Naive thymus-derived CD8-positive, alpha-beta T cell (primary cell): ENCODE measurements at regions of chr1 and their contacts with region 1.

Region 1: DNA sequence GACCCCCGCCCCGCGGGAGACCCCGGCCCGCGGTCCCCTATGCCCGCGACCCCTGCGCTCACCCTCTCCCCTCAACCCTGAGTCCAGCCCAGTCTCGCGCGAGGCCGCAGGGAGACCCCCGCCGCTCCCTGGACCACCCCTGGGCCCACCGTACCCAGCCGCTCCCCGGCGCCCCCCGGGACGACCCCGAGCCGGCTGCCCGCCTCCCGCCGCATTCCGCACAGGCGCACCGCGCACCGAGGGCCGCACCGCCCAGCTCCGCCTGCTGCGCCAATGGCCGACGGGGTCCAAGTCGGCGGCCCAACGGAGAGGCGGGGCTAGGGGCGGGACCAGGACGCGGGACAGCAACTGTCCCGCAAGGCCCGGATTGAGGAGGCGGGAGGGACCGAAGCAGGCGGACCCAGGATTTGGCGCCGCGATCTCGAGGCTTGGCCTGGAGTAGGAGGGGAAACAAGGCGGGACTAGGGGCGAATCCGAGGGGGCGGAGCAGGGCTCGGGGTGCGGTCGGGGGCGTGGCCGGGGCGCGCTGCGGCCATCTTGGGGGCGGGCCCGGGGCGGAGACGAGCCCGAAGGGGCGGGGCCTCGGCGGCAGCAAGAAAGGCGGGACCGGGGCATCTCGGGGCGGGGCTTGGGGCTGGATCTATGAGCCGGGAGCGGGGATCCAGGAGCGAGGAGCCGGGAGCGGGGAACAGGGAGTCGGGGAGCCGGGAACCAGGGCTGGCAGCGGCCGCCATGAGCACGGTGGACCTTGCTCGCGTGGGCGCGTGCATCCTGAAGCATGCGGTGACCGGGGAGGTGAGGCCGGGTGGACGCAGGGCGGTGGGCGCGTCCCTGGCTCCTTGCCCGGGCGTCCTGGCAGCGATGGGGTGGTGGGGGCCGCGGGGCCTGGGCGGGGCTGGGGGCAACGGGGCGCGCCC is at the start of gene PRXL2B:
- DNase-seq: peak; percentile 91 to 100 (median 96)
- ATAC-seq: peak; percentile 57 to 65
- H3K4me3 Mint-ChIP-seq: peak within 1 kb of the TSS; percentile 88 to 96 (median 92)
- H3K27ac Mint-ChIP-seq: peak within 1 kb of the TSS; percentile 88 to 99 (median 97)
- H3K4me1 Mint-ChIP-seq: peaks cover 26 to 49% (median 42%) of the 10 kb centered on the region in 4 donors
- H3K27me3 Mint-ChIP-seq: no peaks in the 10 kb centered on the region
- polyA plus RNA-seq, gene PRXL2B: 20.6 to 37.5 (median 27.4) TPM

Region 2: GRCh38 chr1:2391041-2391930 is 195.1 kb before region 1 on chr1 and contains the starts of genes MORN1 and RER1:
- POLR2A ChIA-PET with region 1: interaction called, 13 read pairs
- DNase-seq: peak; percentile 90 to 100 (median 99)
- ATAC-seq: peak; percentile 95 to 96
- H3K4me3 Mint-ChIP-seq: peak within 1 kb of the TSS; percentile 82 to 94 (median 90)
- H3K27ac Mint-ChIP-seq: peak within 1 kb of the TSS; percentile 87 to 94 (median 92)
- H3K4me1 Mint-ChIP-seq: peaks cover 22 to 43% (median 37%) of the 10 kb centered on the region in 4 donors
- H3K27me3 Mint-ChIP-seq: no peaks in the 10 kb centered on the region
- polyA plus RNA-seq, gene MORN1: 4.3 to 7.1 (median 5.0) TPM
- polyA plus RNA-seq, gene RER1: 118 to 146 (median 126) TPM

Region 3: DNA sequence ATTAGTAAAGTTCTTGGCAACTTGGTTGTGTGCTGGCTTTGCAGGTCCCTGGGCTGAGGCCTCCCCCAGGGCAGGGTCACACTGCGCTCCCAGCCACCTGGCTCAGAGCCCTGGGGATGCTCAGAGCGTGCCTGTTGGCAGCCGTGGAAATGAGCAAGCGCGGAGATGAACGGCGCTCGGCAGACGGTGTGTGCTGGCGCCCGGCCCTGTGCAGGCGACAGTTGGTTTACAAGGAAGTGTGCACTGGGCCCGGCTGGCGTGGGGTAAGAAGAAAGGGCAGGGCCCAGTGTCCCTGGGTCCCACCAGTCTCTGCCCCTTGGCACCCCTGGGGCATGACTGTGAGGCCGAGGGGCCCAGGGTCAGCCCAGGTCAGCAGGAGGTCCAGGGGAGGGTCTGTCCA is 148.4 kb before region 1 on chr1:
- POLR2A ChIA-PET with region 1: no interaction called
- DNase-seq: no peak
- ATAC-seq: no peak
- H3K4me3 Mint-ChIP-seq: no peak overlapping the region
- H3K27ac Mint-ChIP-seq: no peak overlapping the region
- H3K4me1 Mint-ChIP-seq: peaks cover 0 to 7% (median 4%) of the 10 kb centered on the region in 4 donors
- H3K27me3 Mint-ChIP-seq: peaks cover 0 to 6% (median 0%) of the 10 kb centered on the region in 5 donors

Region 4: GRCh38 chr1:2494323-2494693 is 92.1 kb before region 1 on chr1:
- POLR2A ChIA-PET with region 1: interaction called, 16 read pairs
- DNase-seq: no peak
- ATAC-seq: no peak
- H3K4me3 Mint-ChIP-seq: peak overlapping the region in 7 of 10 donors; percentile 55 to 80 (median 72)
- H3K27ac Mint-ChIP-seq: peak overlapping the region; percentile 82 to 95 (median 92)
- H3K4me1 Mint-ChIP-seq: peaks cover 20 to 63% (median 38%) of the 10 kb centered on the region in 4 donors
- H3K27me3 Mint-ChIP-seq: no peaks in the 10 kb centered on the region

Region 5: DNA sequence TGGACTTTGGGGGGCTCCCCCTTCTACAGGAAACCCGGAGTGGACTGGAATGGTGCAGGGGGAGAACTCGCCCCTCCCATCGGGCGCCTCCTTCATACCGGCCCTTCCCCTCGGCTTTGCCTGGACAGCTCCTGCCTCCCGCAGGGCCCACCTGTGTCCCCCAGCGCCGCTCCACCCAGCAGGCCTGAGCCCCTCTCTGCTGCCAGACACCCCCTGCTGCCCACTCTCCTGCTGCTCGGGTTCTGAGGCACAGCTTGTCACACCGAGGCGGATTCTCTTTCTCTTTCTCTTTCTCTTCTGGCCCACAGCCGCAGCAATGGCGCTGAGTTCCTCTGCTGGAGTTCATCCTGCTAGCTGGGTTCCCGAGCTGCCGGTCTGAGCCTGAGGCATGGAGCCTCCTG is 30.1 kb before region 1 on chr1 and contains the start of gene TNFRSF14:
- POLR2A ChIA-PET with region 1: interaction called, 408 read pairs
- DNase-seq: peak; percentile 53 to 87 (median 74)
- ATAC-seq: peak; percentile 73 to 79
- H3K4me3 Mint-ChIP-seq: peak within 1 kb of the TSS; percentile 91 to 99 (median 98)
- H3K27ac Mint-ChIP-seq: peak within 1 kb of the TSS; percentile 93 to 99 (median 98)
- H3K4me1 Mint-ChIP-seq: peaks cover 28 to 62% (median 44%) of the 10 kb centered on the region in 4 donors
- H3K27me3 Mint-ChIP-seq: no peaks in the 10 kb centered on the region
- polyA plus RNA-seq, gene TNFRSF14: 45.8 to 61.6 (median 48.9) TPM

Region 6: DNA sequence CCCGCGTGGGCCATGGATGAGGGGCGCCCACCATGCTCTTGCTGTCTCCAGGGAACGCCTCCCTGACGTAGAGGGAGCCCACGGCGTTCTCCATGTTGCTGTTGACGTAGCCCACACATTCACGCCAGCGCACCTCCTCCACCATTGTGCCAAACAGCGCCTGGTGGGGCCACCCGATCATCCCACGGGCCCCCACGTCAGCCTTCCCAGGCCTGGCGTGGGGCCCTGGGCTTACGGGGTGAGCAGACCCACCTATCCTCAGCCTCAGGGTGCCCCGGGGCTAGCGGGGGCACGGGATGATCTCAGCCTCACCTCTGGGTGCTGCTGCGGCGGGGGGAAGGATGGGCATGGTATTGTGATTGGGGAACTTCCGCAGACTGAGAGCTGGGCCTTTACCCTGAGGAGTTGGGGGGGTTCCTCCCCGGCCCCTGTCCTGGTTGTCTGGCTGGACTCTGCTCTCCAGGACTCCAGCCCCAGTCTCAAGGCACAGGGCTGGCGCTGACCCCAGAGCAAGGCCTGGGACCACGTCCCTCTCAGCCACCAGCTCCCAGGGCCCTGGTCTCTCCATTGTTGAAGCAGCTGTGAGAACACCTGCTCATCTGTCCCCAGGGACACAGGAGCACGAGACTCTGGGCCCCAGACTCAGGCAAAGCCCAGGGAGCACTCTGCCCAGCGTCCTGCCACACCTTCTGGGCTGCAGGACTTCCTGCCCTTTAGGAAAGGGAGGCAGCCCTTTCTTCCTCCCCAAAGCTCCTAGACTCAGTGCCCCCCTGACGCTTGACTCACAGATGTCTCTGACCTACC is 10.3 kb after region 1 on chr1:
- POLR2A ChIA-PET with region 1: no interaction called
- DNase-seq: no peak
- ATAC-seq: no peak
- H3K4me3 Mint-ChIP-seq: no peak overlapping the region
- H3K27ac Mint-ChIP-seq: peak overlapping the region in 1 of 10 donors; percentile 57
- H3K4me1 Mint-ChIP-seq: peaks cover 0 to 14% (median 7%) of the 10 kb centered on the region in 4 donors
- H3K27me3 Mint-ChIP-seq: peaks cover 0 to 1% (median 0%) of the 10 kb centered on the region in 5 donors

Region 7: DNA sequence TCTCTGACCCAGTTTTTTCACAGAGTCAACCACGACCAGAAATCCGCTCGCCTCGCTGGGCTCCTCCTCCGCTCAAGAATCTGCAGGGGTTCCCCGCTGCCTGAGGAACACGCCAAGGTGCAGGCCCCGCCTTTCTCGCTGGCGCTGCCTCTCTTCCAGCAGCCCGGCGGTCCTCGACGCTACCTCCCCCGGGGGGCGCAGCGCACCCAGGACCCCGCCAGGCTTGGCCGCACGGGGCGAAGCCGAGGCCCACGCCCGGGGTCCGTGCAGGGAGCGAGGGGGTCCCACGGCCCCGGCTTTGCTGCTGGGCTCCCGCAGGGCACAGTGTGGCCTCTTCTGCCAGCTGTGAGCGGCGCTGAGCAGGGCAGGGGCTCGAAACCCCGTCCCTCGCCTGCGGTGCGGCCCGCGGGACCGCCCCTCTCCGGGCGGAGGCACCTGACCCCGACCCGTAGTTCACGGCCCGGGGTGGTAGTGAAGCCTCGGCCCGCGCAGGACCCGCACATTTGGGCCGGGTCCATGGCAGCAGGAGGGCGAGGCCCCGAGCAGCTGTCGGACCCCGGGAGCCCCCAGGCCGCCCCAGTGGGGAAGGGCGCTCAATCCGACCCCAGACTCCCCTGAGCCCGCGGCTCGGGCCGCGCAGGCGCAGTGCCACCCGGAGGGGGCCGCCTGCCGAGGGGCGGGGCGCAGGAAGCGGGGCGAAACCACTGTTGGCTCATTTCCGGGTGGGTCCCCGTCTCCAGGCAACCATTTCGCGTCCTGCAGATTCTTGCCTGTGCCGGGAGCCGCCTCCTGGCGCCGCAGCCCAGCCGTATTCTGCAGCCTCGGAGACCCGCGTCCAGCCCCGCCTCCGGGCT is 56.4 kb after region 1 on chr1:
- POLR2A ChIA-PET with region 1: interaction called, 50 read pairs
- DNase-seq: peak; percentile 92 to 98 (median 96)
- ATAC-seq: peak; percentile 82 to 84
- H3K4me3 Mint-ChIP-seq: peak overlapping the region; percentile 78 to 94 (median 90)
- H3K27ac Mint-ChIP-seq: peak overlapping the region; percentile 85 to 97 (median 92)
- H3K4me1 Mint-ChIP-seq: peaks cover 8 to 32% (median 21%) of the 10 kb centered on the region in 4 donors
- H3K27me3 Mint-ChIP-seq: no peaks in the 10 kb centered on the region